ENCODE measurements at regions of chr2 and their contacts with region 1.

Region 1: DNA sequence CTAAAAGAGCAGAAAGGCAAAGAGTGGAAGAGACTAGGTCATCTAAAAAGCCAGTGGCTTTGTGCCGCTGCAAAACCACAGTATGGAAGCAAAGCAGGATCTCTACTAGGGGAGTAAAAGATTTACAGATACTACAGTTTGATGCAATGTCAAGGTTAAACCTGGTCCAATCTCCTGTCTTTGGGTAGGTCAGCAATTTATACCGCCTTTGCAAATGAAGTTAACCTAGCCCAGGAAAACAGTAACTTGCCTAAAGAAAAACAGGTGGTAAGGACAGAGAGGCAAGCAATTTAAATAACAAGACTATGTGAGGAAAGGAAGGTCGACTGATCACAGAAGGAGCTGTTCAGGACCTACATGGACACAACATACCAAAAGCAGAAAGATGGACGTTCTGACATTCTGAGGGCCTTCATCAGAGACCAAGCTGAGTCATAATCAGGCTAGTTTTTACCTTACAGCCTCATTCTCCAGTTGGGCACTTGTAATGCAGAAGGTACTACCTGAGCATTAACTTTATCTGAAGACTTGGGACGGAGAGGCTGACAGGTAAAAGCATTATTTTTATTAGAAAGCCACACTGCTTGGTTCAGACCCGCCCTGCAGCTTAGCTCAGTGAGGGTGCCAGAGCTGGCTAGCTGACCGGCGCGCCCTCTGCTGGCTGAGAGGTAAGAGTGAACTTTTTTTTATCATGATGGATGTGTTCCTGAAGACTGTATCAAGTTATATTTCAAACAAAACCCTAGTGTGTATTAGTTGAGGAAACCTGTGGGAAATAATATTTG is 15.9 kb downstream of the CDKL4 start:
- DNase-seq: peak; percentile 83
- ATAC-seq: peak; percentile 91 to 93

Region 2: GRCh38 chr2:38925982-38926381 is 301.8 kb before region 1 on chr2:
- intact Hi-C with region 1: no loop called
- DNase-seq: no peak
- ATAC-seq: no peak

Region 3: DNA sequence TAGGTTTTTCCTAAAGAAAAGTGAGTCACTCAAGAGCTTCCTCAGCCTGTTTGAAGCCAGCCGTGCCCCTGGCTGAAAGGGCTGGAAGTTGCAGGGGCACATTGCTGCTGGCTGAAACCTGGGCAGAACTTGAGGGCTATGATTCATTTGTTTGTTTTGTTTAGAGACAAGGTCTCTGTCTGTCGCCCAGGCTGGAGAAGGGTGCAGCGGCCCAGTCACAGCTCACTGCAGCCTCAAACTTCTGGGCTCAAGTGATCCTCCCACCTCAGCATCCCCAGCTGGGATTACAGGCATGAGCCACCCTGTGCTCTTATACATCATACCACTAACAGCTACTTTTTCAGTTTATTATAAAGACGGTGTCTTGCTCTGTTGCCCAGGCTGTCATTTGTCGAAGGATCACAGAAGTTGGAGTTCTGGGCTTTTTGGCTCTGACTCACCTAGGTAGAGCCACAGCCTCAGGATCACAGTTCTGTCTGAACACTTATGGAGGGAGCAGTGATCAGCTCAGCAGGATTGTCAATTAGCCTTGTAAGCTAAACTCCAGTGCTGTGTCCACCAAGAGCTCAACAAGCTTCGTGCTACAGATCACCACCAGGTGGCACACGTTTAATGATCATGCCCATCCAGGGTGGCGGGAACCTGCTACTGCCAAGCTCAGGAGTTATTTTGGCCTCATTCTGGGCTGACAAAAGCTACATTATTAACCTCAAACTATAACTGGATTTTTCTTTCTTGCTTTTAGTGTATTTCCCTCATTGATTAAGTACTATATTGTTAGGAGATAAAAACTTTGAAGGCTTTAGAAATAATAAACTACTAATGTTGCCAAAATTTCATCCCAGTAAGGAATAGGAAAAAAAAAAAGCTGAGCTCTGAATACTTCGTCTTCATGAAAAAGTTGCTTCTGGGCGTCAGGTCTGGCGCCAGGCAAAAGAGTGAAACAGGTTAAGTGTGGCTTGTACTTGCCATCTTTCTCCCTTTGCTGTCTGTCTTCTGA is 280.3 kb before region 1 on chr2:
- intact Hi-C with region 1: loop called (anchors 5 kb)
- DNase-seq: peak; percentile 69
- ATAC-seq: peak; percentile 73 to 76

Region 4: DNA sequence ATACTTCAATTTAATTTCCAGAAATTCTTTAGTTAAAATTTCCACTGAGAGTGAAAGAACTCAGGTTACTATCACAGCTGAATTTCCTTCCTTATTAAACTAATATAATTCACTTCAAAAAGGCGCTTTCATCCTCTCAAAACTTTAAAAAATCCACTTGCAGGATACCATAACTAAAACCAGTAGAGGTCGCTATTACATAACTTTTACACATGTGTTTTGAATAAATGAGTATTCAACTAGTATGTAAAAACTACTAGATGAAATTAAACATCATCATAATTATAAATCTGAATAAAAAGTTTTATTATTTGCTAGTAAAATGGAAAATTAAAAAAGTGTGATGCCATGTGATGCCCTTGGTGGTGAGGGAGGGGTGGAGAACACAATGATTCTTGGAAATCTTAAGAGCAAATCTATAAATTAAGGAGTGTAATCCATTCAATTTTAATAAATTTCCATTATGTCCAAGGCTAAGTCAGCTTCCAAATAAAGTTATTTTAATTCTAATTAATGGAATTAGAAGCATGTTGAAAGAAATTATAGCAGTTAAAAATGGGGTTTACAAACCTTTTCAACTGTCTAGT is 168.4 kb before region 1 on chr2:
- intact Hi-C with region 1: loop called (anchors 2 to 5 kb)
- DNase-seq: no peak
- ATAC-seq: no peak

Region 5: GRCh38 chr2:39124000-39124745 is 103.6 kb before region 1 on chr2:
- intact Hi-C with region 1: loop called (anchors 2 to 10 kb)
- DNase-seq: peak; percentile 97
- ATAC-seq: peak; percentile 90 to 94